Posterior vena cava (tissue), 2 donors: ENCODE measurements at regions of chr12 and their contacts with region 1.

Region 1: DNA sequence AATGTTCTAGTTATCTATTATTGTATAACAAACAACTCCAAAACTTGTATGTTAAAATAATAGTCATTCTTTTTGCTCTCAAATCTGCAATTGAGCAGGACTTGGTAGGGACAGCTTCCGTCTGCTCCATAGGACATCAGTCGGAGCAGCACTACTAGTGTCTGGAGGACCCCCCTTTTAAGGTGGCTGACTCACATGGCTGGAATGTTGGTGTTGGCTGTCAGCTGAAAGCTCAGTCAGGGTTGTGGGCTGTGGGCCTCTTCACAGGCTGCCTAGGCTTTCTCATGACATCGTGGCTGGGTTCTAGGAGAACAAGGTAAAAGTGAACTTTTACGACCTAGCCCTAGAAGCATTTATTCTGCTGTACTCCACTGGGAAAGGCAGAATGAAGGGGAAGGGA is 160.6 kb downstream of the ANO4 start:
- DNase-seq: no peak

Region 2: DNA sequence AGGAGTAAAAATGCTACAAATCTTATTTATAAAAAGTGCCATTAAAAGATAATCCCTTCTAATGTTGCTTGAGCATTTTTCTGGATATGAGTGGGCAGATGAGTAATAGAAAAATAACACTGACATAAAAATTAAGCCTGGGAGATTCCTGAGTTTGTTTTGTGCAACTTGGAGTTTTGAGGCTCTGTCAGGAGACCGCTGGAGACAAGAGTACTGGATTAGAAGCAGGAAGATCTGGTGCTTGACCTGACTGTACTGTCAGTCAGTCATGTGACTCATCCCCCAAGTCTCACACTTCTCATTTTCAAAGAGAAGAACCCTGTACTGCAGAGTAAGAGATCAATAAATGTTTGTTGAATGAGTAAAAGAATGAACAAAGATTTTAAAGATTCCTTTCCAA is 131.2 kb before region 1 on chr12:
- intact Hi-C with region 1: no loop called
- DNase-seq: no peak

Region 3: DNA sequence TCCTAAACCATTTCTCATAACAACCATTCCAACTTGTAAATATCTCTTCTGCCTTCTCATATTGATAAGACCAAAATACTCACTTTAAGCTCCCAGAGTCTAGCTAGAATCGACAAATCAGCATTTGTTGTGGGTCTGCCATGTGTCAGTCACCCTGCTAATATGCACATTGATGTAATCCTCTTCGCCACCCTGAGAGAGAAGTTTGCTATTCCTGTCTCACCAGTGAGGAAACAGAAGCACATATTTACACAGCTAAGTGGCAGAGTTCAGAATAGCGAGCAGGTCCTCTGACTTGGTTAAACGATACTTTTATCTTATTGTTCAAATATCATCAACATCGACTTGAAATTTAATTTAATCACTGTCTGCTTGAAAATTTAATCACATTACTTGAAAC is 18.5 kb before region 1 on chr12:
- intact Hi-C with region 1: no loop called
- DNase-seq: no peak

Region 4: GRCh38 chr12:102740141-102740955 is 1785.2 kb after region 1 on chr12:
- intact Hi-C with region 1: loop called in 1 of 2 experiments (anchors 10 kb)
- DNase-seq: no peak